Activated CD4-positive, alpha-beta T cell treated with anti-CD3 and anti-CD28 coated beads, Interleukin-2, amount 10 ng/mL, durations not matched to agents 24 days and 14 days (primary cell): ENCODE measurements at regions of chr18 and their contacts with region 1.

Region 1: DNA sequence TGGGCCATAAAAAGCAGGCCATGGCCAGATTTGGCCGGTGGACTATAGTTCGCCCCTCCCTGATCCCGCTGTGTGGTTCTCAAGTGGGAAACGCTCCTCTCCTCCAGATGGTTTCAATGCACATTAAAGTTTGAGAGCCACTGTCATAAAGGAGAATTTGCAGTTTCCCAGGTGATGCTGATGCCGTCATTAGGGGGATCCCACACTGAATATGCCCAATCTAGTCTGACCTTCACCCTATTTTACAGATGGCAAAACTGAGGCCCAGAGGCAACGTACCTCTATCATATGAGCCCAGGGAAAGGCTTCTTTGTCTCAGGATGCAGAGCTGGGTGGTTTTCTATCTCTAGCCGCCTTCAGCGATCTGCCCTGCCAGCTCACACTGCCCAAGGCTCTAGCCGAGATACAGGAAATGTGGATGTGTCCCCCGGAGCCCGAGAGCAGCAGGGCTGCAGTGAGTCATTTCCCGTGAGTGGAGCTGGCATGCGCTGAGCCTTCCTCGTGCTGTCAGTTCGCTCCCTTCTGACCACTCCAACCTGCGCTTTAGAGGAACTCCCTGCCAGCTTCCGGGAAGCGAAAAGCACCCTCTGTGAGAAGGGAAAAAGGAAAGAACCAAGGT is 116.2 kb downstream of the SMAD7 start:
- DNase-seq: peak; percentile 91
- H3K4me3 Mint-ChIP-seq: peak overlapping the region; percentile 89
- H3K27ac Mint-ChIP-seq: peak overlapping the region; percentile 99
- H3K4me1 Mint-ChIP-seq: peaks cover 66% of the 10 kb centered on the region
- H3K27me3 Mint-ChIP-seq: no peaks in the 10 kb centered on the region

Region 2: GRCh38 chr18:48800876-48801727 is 33.4 kb before region 1 on chr18:
- intact Hi-C with region 1: loop called (anchors 1 kb)
- DNase-seq: no peak
- H3K4me3 Mint-ChIP-seq: peak overlapping the region; percentile 66
- H3K27ac Mint-ChIP-seq: peak overlapping the region; percentile 97
- H3K4me1 Mint-ChIP-seq: peaks cover 67% of the 10 kb centered on the region
- H3K27me3 Mint-ChIP-seq: no peaks in the 10 kb centered on the region

Region 3: GRCh38 chr18:48813833-48814489 is 20.6 kb before region 1 on chr18:
- intact Hi-C with region 1: loop called (anchors 1 kb)
- DNase-seq: peak; percentile 86
- H3K4me3 Mint-ChIP-seq: peak overlapping the region; percentile 27
- H3K27ac Mint-ChIP-seq: peak overlapping the region; percentile 85
- H3K4me1 Mint-ChIP-seq: peaks cover 51% of the 10 kb centered on the region
- H3K27me3 Mint-ChIP-seq: peaks cover 2% of the 10 kb centered on the region

Region 4: GRCh38 chr18:48820483-48821250 is 13.9 kb before region 1 on chr18:
- intact Hi-C with region 1: loop called (anchors 1 kb)
- DNase-seq: no peak
- H3K4me3 Mint-ChIP-seq: no peak overlapping the region
- H3K27ac Mint-ChIP-seq: peak overlapping the region; percentile 45
- H3K4me1 Mint-ChIP-seq: peaks cover 29% of the 10 kb centered on the region
- H3K27me3 Mint-ChIP-seq: peaks cover 6% of the 10 kb centered on the region

Region 5: GRCh38 chr18:48868468-48869466 is 34.2 kb after region 1 on chr18:
- intact Hi-C with region 1: loop called (anchors 1 kb)
- DNase-seq: peak; percentile 83
- H3K4me3 Mint-ChIP-seq: peak overlapping the region; percentile 73
- H3K27ac Mint-ChIP-seq: peak overlapping the region; percentile 97
- H3K4me1 Mint-ChIP-seq: peaks cover 28% of the 10 kb centered on the region
- H3K27me3 Mint-ChIP-seq: no peaks in the 10 kb centered on the region

Region 6: DNA sequence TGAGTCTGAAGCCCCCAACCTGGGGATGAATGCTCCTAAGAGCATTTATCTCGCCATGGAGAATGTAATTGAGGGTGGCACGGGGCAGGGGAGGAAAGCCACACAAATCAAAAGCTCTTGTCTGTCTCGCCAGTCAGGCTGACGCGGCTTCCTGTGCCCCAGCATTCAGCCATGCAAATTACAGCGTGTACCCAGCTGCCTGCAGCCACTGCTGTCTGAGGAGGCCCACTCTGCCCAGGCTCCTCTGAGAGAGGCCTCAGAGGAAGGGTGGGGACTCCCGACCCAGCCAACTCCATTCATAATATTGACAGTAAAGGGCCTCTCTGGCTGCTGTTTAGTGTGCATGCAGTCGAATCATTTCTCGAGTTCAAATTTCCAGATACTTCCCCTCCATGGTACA is 94.3 kb after region 1 on chr18:
- intact Hi-C with region 1: loop called (anchors 2 kb)
- DNase-seq: peak; percentile 89
- H3K4me3 Mint-ChIP-seq: peak overlapping the region; percentile 84
- H3K27ac Mint-ChIP-seq: peak overlapping the region; percentile 89
- H3K4me1 Mint-ChIP-seq: peaks cover 89% of the 10 kb centered on the region
- H3K27me3 Mint-ChIP-seq: no peaks in the 10 kb centered on the region